Pancreas (tissue), 10 donors: ENCODE measurements at regions of chr20 and their contacts with region 1.

Region 1: GRCh38 chr20:51595058-51595532 is 52.6 kb upstream of the NFATC2 start:
- DNase-seq: peak; percentile 70 to 92 (median 84)
- ATAC-seq: peak; percentile 94 to 100 (median 99)
- H3K4me3 ChIP-seq: no peak overlapping the region
- H3K27ac ChIP-seq: no peak overlapping the region
- H3K4me1 ChIP-seq: no peaks in the 10 kb centered on the region
- H3K27me3 ChIP-seq: no peaks in the 10 kb centered on the region
- CTCF ChIP-seq: peak; percentile 46 to 77 (median 66)

Region 2: DNA sequence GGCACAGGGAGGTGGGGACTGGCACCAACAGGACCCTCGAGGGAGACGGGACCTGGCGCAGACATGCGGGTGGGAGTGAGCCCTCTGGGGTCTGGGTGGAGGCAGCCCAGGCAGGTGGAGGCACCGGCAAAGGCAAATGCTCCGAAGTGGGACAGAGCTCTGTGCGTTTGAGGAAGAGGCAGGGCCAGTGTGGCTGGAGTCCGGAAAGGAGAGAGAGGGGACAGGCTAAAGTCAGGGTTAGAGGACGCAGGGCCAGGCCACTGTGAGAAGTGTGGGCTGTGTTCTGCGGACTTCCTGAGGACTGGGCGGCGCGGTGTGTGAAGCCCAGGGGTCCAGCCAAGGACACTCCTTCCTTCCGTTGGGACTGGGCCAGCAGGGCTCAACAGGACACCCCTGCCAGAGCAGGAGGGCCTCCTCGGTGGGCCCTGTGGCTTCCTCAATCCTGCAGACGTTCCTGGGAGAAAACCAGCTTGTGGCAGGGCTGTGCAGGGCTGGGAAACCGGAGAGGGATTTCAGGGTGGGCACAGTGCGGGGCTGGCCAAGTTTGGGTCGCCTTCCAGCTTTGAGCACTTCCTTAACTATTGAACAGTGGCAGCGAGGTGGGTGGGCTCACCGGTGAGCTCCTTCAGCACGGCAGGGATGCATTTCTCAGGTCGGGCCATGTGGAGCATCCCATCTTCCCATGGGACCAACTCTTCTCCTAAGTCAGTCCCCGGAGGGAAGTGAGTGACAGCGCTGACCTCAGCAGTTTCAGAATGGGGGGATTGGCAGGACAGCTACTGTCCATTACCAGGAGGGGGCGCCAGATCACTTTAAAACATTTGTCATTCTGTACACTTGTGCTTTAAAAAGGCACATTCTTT is 614.0 kb before region 1 on chr20:
- intact Hi-C with region 1: loop called in 1 of 3 experiments (anchors 10 kb)
- DNase-seq: peak in 5 of 6 donors; percentile 16 to 65 (median 47)
- ATAC-seq: peak; percentile 28 to 77 (median 66)
- H3K4me3 ChIP-seq: no peak overlapping the region
- H3K27ac ChIP-seq: no peak overlapping the region
- H3K4me1 ChIP-seq: no peaks in the 10 kb centered on the region
- H3K27me3 ChIP-seq: no peaks in the 10 kb centered on the region
- CTCF ChIP-seq: peak; percentile 56 to 85 (median 64)

Region 3: DNA sequence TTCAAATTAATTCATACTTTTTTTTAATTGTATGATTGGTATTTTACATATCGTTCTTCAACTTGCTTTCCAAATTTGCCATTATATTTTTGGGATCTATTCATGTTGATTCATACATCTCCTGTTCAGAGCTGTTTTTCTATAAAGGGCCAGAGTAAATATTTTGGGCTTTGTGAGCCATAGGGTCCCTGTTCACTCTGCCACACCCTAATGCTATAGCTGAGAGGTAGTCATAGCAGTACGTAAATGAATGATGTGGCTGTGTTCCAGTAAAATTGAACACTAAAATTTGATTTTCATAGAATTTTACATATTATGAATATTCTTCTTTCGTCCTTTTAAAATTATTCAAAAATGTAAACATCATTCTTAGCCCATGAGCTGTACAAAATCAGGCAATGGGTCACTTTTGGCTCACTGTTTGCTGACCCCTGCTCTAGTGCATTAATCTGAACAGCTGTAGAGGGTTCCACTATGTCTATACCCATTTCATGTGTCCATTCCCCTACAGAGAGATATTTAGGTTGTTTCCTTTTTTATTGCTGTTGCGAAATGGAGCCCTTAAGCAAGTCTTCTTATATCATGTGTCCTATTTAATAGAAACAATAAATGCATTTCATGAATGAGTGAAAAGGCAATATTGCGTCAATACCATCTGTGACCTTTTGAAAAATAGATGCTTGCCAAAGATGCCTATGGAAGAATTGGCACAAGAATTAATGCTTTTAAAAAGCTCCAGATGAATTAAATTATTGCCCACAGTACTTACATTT is 343.6 kb after region 1 on chr20:
- intact Hi-C with region 1: no loop called
- DNase-seq: no peak
- ATAC-seq: no peak
- H3K4me3 ChIP-seq: no peak overlapping the region
- H3K27ac ChIP-seq: no peak overlapping the region
- H3K4me1 ChIP-seq: no peaks in the 10 kb centered on the region
- H3K27me3 ChIP-seq: no peaks in the 10 kb centered on the region
- CTCF ChIP-seq: no peak